Left lung (tissue), 14 donors: ENCODE measurements at regions of chr3 and their contacts with region 1.

Region 1: GRCh38 chr3:196073188-196073838 is 8.6 kb downstream of the TFRC start:
- DNase-seq: peak in 2 of 4 donors; percentile 56 to 80
- ATAC-seq: peak; percentile 93
- H3K4me3 ChIP-seq: no peak overlapping the region
- H3K27ac ChIP-seq: no peak overlapping the region
- H3K4me1 ChIP-seq: no peaks in the 10 kb centered on the region
- H3K27me3 ChIP-seq: no peaks in the 10 kb centered on the region
- CTCF ChIP-seq: peak; percentile 69 to 72

Region 2: DNA sequence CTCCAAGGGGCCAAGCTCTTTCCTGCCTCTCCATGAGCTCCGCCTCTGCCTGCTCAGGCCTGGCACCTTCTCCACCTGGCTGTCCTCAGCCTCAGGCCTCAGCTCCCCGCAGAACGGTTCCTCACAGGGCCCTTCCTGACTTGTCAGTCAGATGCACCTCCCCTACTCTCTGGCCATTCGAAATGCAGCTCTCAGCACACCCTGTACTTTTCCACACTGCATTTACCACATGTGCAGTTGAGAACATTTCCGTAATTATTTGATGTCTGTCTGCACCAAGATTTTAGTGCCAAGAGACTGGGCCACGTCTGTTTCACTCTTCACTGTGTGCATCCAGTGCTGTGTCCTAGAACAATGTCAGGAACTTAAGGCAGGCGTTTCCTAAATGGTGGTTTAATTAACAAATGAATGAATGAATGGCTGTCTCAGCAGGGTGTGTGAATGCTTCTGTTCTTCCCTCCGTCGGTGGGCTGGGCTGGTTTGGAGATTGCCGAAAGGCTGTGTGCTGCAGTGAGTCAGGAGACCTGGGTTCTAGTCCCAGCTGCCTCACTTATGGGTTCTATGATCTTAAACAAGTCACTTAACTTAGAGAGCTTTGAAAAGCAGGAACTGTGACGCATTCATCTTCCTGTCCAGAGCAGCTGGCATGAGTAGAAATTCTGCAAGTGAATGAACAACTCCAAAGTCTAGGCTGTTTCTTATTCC is 266.9 kb before region 1 on chr3:
- intact Hi-C with region 1: no loop called
- DNase-seq: no peak
- ATAC-seq: peak; percentile 50
- H3K4me3 ChIP-seq: no peak overlapping the region
- H3K27ac ChIP-seq: no peak overlapping the region
- H3K4me1 ChIP-seq: peaks cover 0 to 25% of the 10 kb centered on the region in 2 donors
- H3K27me3 ChIP-seq: peaks cover 0 to 41% of the 10 kb centered on the region in 2 donors
- CTCF ChIP-seq: no peak

Region 3: DNA sequence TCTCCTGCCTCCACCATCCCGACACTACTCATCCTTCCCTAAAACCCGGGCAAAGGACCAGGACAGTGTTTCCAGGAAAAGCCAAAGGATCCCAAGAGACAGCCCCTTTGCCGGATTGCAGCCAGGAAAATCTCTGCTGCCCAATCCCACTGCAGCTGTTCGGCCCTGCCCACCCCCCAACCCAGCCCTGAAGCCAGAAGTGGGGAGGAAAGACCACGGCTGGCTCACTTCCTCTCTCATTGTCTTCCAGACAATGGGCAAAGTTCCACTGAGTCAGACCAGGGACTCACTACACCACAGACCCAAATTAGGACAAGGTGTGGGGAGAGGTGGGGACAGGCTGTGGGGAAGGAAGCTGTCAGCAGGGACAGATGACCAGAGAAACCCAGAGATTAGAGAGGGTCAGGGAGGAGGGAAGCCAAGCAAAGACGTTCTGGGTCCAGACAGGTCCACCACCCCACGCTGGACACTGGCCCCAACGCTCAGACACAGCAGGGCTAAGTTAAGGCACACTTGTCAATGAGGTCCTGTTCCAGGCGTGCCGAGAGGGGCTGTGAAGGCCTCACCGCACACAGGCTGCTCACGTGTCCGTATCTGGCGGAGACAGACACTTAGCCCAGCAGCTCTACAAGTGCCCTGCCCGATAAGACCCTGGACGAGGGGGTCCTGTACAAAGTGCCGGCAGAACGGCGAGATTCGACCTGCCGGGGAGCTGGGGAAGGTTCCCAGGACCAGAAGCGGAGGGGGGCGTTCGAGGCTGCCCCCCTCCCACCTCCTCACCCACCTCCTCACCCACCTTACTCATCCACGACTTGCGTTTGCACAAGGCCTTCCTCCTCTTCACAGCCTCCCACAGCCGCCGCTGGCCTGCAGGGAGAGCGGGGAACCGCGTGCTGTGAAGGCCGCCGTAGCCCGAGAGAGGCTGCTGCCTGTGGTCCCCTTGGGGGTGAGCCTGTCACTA is 186.9 kb before region 1 on chr3:
- intact Hi-C with region 1: no loop called
- DNase-seq: peak in 2 of 4 donors; percentile 42 to 76
- ATAC-seq: peak; percentile 59
- H3K4me3 ChIP-seq: no peak overlapping the region
- H3K27ac ChIP-seq: peak overlapping the region; percentile 73 to 77
- H3K4me1 ChIP-seq: peaks cover 2 to 29% of the 10 kb centered on the region in 2 donors
- H3K27me3 ChIP-seq: no peaks in the 10 kb centered on the region
- CTCF ChIP-seq: no peak

Region 4: GRCh38 chr3:196192036-196192523 is 118.8 kb after region 1 on chr3:
- intact Hi-C with region 1: loop called in 1 of 2 experiments (anchors 5 kb)
- DNase-seq: peak in 1 of 4 donors; percentile 86
- ATAC-seq: peak; percentile 9
- H3K4me3 ChIP-seq: no peak overlapping the region
- H3K27ac ChIP-seq: peak overlapping the region; percentile 77 to 94
- H3K4me1 ChIP-seq: peaks cover 3 to 58% of the 10 kb centered on the region in 2 donors
- H3K27me3 ChIP-seq: no peaks in the 10 kb centered on the region
- CTCF ChIP-seq: no peak

Region 5: DNA sequence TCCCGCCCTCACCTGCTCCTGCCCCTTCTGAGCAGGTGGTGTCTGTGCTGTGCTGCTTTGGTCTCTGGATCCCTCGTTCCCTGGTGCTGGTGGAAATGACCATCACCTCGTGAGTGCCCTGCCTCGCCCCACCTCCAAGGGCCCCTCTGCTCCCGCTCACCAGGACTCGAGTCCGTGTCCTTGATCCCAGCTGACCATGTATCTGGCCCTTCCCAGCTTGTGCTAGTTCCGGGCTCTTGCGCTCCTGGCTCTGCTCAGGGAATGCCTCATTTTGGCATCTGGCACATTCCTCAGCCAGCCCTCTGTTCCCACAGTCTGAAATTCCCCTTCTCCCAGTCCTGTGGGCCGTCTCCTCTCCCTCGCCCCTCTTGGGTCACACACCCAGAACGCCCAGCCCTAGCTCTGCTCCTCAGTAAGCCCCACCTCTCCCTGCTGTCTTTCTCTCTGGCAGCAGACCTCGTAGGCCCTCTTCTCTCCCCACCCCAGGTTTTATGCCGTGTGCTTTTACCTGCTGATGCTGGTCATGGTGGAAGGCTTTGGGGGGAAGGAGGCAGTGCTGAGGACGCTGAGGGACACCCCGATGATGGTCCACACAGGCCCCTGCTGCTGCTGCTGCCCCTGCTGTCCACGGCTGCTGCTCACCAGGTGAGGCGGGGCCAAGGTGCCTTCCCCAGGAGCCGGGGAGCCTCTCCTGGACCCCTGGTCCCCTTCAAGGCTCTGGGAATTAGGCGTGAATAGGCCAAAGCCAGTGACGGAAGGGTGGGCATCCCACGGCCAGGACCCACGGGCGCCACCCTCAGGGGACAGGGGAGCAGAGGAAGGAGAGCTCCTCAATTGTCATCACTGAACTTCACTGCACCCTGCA is 154.5 kb after region 1 on chr3:
- intact Hi-C with region 1: no loop called
- DNase-seq: no peak
- ATAC-seq: peak; percentile 52
- H3K4me3 ChIP-seq: no peak overlapping the region
- H3K27ac ChIP-seq: no peak overlapping the region
- H3K4me1 ChIP-seq: peaks cover 0 to 5% of the 10 kb centered on the region in 2 donors
- H3K27me3 ChIP-seq: no peaks in the 10 kb centered on the region
- CTCF ChIP-seq: no peak

Region 6: DNA sequence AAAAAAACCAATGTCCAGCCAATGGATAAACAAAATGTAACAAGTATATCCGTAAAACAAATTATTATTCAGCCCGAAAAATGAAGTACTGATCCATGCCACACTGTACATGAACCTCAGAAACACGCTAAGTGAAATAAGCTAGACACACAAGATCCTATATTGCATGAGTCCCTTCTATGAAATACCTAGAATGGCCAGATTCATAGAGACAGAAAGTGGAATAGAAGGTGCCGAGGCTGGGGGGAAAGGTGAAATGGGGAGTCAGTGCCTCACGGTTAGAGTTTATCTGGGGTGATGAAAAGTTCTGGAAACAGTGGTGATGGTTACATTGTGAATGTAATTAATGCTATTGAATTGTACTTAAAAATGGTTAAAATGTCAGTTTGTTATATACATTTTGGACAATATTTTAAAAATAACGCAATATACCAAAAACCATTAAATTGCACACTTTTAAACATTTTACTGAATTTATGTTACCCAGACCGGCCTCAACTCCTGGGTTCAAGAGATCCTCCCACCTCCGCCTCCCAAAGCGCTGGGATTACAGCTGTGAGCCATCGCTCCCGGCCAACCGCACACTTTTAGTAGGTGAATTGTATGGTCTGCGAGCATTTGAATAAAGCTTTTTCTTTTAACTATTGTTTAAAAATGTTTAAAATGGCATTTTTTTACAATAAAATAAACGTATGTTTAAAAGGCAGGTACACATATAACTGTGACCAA is 428.2 kb after region 1 on chr3:
- intact Hi-C with region 1: no loop called
- DNase-seq: no peak
- ATAC-seq: peak; percentile 6
- H3K4me3 ChIP-seq: peak overlapping the region; percentile 82 to 83
- H3K27ac ChIP-seq: peak overlapping the region; percentile 70 to 96
- H3K4me1 ChIP-seq: peaks cover 9 to 30% of the 10 kb centered on the region in 2 donors
- H3K27me3 ChIP-seq: no peaks in the 10 kb centered on the region
- CTCF ChIP-seq: no peak